Activated CD4-positive, alpha-beta T cell treated with anti-CD3 and anti-CD28 coated beads for 36 hours (primary cell): ENCODE measurements at regions of chr3 and their contacts with region 1.

Region 1: GRCh38 chr3:54427941-54428871 is 305.9 kb downstream of the CACNA2D3 start:
- DNase-seq: peak; percentile 69
- ATAC-seq: no peak
- H3K4me3 Mint-ChIP-seq: no peak overlapping the region
- H3K27ac Mint-ChIP-seq: no peak overlapping the region
- H3K4me1 Mint-ChIP-seq: no peaks in the 10 kb centered on the region
- H3K27me3 Mint-ChIP-seq: peaks cover 2% of the 10 kb centered on the region

Region 2: GRCh38 chr3:54830658-54831057 is 402.5 kb after region 1 on chr3:
- CTCF ChIA-PET with region 1: no interaction called
- POLR2A ChIA-PET with region 1: no interaction called
- intact Hi-C with region 1: loop called in 1 of 2 experiments (anchors 5 kb)
- DNase-seq: peak; percentile 35
- ATAC-seq: no peak
- H3K4me3 Mint-ChIP-seq: no peak overlapping the region
- H3K27ac Mint-ChIP-seq: no peak overlapping the region
- H3K4me1 Mint-ChIP-seq: no peaks in the 10 kb centered on the region
- H3K27me3 Mint-ChIP-seq: no peaks in the 10 kb centered on the region

Region 3: DNA sequence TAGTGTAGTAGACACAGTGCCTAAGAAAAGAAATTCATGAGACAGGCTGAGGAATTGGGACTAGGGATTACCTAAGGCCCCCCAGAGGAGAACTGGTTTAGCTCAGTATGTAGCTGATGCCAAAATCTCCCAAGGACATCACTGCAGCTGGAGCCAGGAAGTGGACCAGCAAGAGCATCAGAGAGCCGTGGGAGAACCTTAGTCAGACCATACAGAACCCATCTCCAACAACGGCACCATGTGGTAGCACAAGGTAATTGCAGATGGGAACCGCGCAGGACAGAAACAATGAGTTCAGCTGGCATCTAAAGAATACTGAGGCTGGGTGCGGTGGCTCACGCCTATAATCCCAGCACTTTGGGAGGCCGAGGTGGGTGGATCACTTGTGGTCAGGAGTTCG is 977.2 kb after region 1 on chr3:
- CTCF ChIA-PET with region 1: no interaction called
- POLR2A ChIA-PET with region 1: no interaction called
- intact Hi-C with region 1: loop called in 1 of 2 experiments (anchors 10 kb)
- DNase-seq: peak; percentile 39
- ATAC-seq: no peak
- H3K4me3 Mint-ChIP-seq: no peak overlapping the region
- H3K27ac Mint-ChIP-seq: no peak overlapping the region
- H3K4me1 Mint-ChIP-seq: no peaks in the 10 kb centered on the region
- H3K27me3 Mint-ChIP-seq: no peaks in the 10 kb centered on the region